ENCODE measurements at regions of chr1 and their contacts with region 1.

Region 1: GRCh38 chr1:86018283-86018923 is 138.2 kb downstream of the COL24A1 start:
- DNase-seq: peak in 1 of 2 experiments; percentile 8
- H3K4me3 ChIP-seq: no peak overlapping the region
- H3K4me3 Mint-ChIP-seq: no peak overlapping the region
- H3K27ac Mint-ChIP-seq: no peak overlapping the region
- H3K4me1 ChIP-seq: no peaks in the 10 kb centered on the region
- H3K4me1 Mint-ChIP-seq: no peaks in the 10 kb centered on the region
- H3K27me3 ChIP-seq: no peaks in the 10 kb centered on the region
- H3K27me3 Mint-ChIP-seq: no peaks in the 10 kb centered on the region
- CTCF ChIP-seq: peak; percentile 41 to 57

Region 2: GRCh38 chr1:85707990-85708828 is 310.2 kb before region 1 on chr1 and contains the start of gene ZNHIT6:
- CTCF ChIA-PET with region 1: no interaction called
- POLR2A ChIA-PET with region 1: no interaction called
- intact Hi-C with region 1: loop called (anchors 1 kb)
- DNase-seq: peak; percentile 91 to 96
- H3K4me3 ChIP-seq: peak within 1 kb of the TSS; percentile 82
- H3K4me3 Mint-ChIP-seq: no peak within 1 kb of the TSS
- H3K27ac Mint-ChIP-seq: no peak within 1 kb of the TSS
- H3K4me1 ChIP-seq: no peaks in the 10 kb centered on the region
- H3K4me1 Mint-ChIP-seq: no peaks in the 10 kb centered on the region
- H3K27me3 ChIP-seq: no peaks in the 10 kb centered on the region
- H3K27me3 Mint-ChIP-seq: no peaks in the 10 kb centered on the region
- CTCF ChIP-seq: peak; percentile 39 to 50
- total RNA-seq, gene ZNHIT6: 13.9 and 16.1 TPM in 2 replicates

Region 3: GRCh38 chr1:85894651-85895050 is 123.8 kb before region 1 on chr1:
- CTCF ChIA-PET with region 1: no interaction called
- POLR2A ChIA-PET with region 1: no interaction called
- intact Hi-C with region 1: loop called (anchors 1 kb)
- DNase-seq: peak in 1 of 2 experiments; percentile 22
- H3K4me3 ChIP-seq: no peak overlapping the region
- H3K4me3 Mint-ChIP-seq: no peak overlapping the region
- H3K27ac Mint-ChIP-seq: no peak overlapping the region
- H3K4me1 ChIP-seq: no peaks in the 10 kb centered on the region
- H3K4me1 Mint-ChIP-seq: no peaks in the 10 kb centered on the region
- H3K27me3 ChIP-seq: no peaks in the 10 kb centered on the region
- H3K27me3 Mint-ChIP-seq: no peaks in the 10 kb centered on the region
- CTCF ChIP-seq: peak; percentile 36 to 43

Measured in Caco-2 (cell line).